Activated T-helper 2 cell treated with anti-CD3 and anti-CD28 coated beads, Interferon-gamma antibody, Interleukin-2, Interleukin-4, amounts not matched to agents 10 μg/mL and 5 μg/mL and 100 μg/mL, durations not matched to agents 14 hours and 24 hours and 36 hours (primary cell): ENCODE measurements at regions of chr10 and their contacts with region 1.

Region 1: GRCh38 chr10:14499601-14499904 is 168.8 kb upstream of the FRMD4A start:
- DNase-seq: no peak
- H3K4me3 Mint-ChIP-seq: no peak overlapping the region
- H3K27ac Mint-ChIP-seq: no peak overlapping the region
- H3K4me1 Mint-ChIP-seq: peaks cover 5% of the 10 kb centered on the region
- H3K27me3 Mint-ChIP-seq: peaks cover 12% of the 10 kb centered on the region

Region 2: DNA sequence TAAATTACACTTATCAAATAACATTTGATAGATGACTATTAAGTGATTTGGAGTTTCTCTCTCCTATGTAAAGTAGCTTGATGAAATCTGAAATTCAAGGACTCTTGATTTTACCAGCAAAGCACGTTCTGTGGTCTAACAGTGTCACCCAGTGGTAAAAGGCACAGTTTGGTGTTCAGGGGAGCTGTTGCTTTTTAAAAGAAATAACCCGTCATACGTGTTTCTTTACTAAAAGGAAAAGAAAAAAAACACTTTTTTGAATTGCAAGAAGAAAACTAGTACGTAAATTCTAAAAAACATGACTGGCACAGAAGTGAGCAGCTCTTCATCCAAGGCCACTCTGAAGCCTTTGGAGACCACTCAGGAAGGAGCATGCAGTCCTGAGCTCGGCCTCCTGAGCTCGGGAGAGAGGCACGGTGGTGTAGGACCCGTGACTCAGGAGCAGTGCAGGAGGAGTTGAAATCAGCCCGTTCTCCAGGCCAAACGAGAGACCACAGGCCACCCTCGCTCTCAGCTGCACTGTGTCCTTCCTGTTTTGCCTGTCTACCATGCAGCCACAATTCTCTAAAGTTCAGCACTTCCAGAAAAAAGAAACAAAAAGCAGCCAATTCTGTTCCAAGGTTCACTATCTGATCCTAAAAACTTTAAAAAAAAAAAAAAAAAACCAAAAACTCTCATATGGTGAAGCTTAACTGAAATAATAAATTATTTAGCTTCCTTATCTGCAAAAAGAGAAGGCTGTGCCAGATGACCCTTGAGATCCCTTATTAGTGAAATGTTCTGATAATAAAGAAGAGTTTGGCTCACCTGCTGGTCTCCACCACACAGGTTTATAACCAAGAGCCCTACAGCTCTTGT is 43.7 kb after region 1 on chr10:
- intact Hi-C with region 1: loop called (anchors 2 kb)
- DNase-seq: no peak
- H3K4me3 Mint-ChIP-seq: peak overlapping the region; percentile 45
- H3K27ac Mint-ChIP-seq: peak overlapping the region; percentile 84
- H3K4me1 Mint-ChIP-seq: peaks cover 63% of the 10 kb centered on the region
- H3K27me3 Mint-ChIP-seq: no peaks in the 10 kb centered on the region

Region 3: DNA sequence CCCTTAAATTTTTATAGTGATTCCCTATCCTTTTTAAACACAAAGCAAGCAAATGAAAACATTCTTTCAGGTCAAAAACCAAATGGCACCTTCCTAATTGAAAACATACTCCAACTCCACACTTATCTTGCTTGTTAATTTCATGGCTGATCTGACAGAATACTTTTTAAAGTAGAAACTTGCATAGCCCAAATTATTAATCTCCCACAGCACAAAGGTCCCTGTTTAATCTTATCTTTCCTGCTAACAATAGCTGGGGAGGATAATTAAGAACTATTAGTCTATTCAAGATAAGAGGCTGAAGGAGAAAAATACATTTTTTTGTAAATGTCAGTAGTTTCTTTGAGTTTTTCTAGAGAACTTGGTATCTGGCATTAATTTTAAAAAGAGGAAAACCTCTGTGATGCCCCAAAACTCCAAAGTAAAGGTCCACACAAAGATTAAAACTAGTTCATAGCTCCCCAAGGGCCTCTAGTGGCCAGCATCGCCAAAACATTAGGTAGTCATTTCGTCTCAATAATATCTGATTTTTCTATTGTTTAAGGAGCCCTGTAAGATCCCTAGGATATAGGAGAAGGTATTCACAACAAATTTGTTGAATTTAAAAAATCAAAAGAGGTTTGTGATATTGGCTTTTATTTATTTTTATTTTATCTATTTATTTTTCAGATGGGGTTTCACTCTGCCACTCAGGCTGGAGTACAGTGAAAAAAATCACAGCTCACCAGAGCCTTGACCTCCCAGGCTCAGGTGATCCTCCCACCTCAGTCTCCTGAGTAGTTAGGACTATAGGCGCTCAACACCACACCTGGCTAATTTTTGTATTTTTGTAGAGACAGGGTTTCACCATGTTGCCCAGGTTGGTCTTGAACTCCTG is 323.6 kb after region 1 on chr10:
- intact Hi-C with region 1: loop called (anchors 1 kb)
- DNase-seq: no peak
- H3K4me3 Mint-ChIP-seq: no peak overlapping the region
- H3K27ac Mint-ChIP-seq: no peak overlapping the region
- H3K4me1 Mint-ChIP-seq: peaks cover 17% of the 10 kb centered on the region
- H3K27me3 Mint-ChIP-seq: peaks cover 18% of the 10 kb centered on the region

Region 4: GRCh38 chr10:14971867-14972448 is 472.4 kb after region 1 on chr10:
- intact Hi-C with region 1: loop called (anchors 5 kb)
- DNase-seq: no peak
- H3K4me3 Mint-ChIP-seq: no peak overlapping the region
- H3K27ac Mint-ChIP-seq: no peak overlapping the region
- H3K4me1 Mint-ChIP-seq: peaks cover 4% of the 10 kb centered on the region
- H3K27me3 Mint-ChIP-seq: peaks cover 11% of the 10 kb centered on the region